Activated CD8-positive, alpha-beta T cell treated with anti-CD3 and anti-CD28 coated beads for 36 hours (primary cell): ENCODE measurements at regions of chr1 and their contacts with region 1.

Region 1: GRCh38 chr1:66300972-66301451 is 232.9 kb upstream of the SGIP1 start:
- DNase-seq: peak; percentile 64
- ATAC-seq: peak; percentile 92
- H3K4me3 Mint-ChIP-seq: peak overlapping the region; percentile 52
- H3K27ac Mint-ChIP-seq: peak overlapping the region; percentile 74
- H3K4me1 Mint-ChIP-seq: peaks cover 43% of the 10 kb centered on the region
- H3K27me3 Mint-ChIP-seq: no peaks in the 10 kb centered on the region
- CTCF ChIP-seq: no peak

Region 2: GRCh38 chr1:66323958-66324625 is 23.1 kb after region 1 on chr1:
- CTCF ChIA-PET with region 1: interaction called, 10 read pairs
- POLR2A ChIA-PET with region 1: interaction called, 4 read pairs
- intact Hi-C with region 1: loop called (anchors 2 kb)
- DNase-seq: no peak
- ATAC-seq: peak; percentile 65
- H3K4me3 Mint-ChIP-seq: no peak overlapping the region
- H3K27ac Mint-ChIP-seq: peak overlapping the region; percentile 43
- H3K4me1 Mint-ChIP-seq: peaks cover 44% of the 10 kb centered on the region
- H3K27me3 Mint-ChIP-seq: no peaks in the 10 kb centered on the region
- CTCF ChIP-seq: no peak

Region 3: DNA sequence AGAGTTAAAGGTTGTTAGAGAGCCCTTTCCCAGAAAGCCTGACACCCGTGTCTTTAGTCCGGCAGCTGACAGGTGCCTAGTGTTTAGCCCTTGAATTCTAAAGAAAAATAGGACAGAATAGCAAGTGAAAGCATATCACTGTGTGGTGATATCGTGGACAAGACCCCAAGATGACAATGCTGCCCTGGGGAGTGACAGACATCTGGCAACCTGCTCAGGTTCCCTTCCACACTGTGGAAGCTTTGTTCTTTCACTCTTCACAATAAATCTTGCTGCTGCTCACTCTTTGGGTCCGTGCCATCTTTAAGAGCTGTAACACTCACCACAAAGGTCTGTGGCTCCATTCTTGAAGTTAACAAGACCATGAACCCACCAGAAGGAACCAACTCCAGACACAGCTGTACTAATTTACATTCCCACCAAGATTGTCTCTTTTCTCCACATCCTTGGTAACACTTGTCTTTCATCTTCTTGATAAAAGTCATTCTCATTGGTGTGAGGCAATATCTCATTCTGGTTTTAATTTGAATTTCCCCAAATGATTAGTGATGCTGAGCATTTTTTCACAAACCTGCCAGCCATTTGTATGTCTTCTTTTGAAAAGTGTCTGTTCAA is 125.3 kb after region 1 on chr1:
- CTCF ChIA-PET with region 1: no interaction called
- POLR2A ChIA-PET with region 1: no interaction called
- intact Hi-C with region 1: no loop called
- DNase-seq: no peak
- ATAC-seq: peak; percentile 37
- H3K4me3 Mint-ChIP-seq: no peak overlapping the region
- H3K27ac Mint-ChIP-seq: no peak overlapping the region
- H3K4me1 Mint-ChIP-seq: peaks cover 7% of the 10 kb centered on the region
- H3K27me3 Mint-ChIP-seq: no peaks in the 10 kb centered on the region
- CTCF ChIP-seq: no peak

Region 4: GRCh38 chr1:66490816-66491215 is 189.8 kb after region 1 on chr1:
- CTCF ChIA-PET with region 1: no interaction called
- POLR2A ChIA-PET with region 1: no interaction called
- intact Hi-C with region 1: no loop called
- DNase-seq: no peak
- ATAC-seq: no peak
- H3K4me3 Mint-ChIP-seq: no peak overlapping the region
- H3K27ac Mint-ChIP-seq: no peak overlapping the region
- H3K4me1 Mint-ChIP-seq: no peaks in the 10 kb centered on the region
- H3K27me3 Mint-ChIP-seq: no peaks in the 10 kb centered on the region
- CTCF ChIP-seq: no peak